Activated CD4-positive, alpha-beta T cell treated with anti-CD3 and anti-CD28 coated beads for 36 hours (primary cell): ENCODE measurements at regions of chrX and their contacts with region 1.

Region 1: DNA sequence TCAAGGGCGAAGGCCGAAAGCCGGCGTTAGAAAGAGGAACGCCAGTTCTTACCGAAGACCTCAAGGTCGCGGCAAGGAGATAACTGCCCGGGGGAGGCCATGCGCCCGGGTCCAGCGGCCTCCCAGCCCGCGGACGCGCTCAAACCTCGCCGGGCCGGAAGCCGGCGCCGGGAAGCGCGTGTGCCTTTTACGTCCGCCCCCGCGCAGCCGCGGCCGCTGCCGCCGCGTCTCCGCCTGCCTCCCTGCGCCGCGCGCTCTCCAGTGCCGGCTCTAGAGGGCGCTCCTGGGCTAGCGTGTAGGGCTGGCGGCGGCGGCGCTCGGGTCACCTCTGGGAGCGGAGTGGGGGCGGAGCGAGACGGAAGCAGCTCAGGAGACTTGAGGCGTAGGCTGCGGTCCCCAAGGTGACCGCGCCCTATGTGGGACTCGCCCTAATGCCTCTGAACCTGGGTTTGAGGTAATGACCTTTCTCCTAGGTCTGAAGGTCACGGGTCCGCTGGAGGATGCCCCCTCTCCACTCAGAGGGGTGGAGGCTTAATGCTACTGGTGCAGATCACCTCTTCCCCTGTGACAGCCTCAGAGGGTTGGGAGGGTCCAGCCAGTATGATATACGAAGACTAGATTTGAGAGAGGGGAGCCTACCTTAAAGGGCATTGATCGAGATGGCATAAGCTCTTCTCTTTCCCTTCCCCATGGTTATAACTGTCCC is 839 bp downstream of the SLC25A5 start:
- DNase-seq: peak; percentile 94
- ATAC-seq: peak; percentile 78
- H3K4me3 Mint-ChIP-seq: peak overlapping the region; percentile 85
- H3K27ac Mint-ChIP-seq: peak overlapping the region; percentile 86
- H3K4me1 Mint-ChIP-seq: peaks cover 12% of the 10 kb centered on the region
- H3K27me3 Mint-ChIP-seq: no peaks in the 10 kb centered on the region

Region 2: DNA sequence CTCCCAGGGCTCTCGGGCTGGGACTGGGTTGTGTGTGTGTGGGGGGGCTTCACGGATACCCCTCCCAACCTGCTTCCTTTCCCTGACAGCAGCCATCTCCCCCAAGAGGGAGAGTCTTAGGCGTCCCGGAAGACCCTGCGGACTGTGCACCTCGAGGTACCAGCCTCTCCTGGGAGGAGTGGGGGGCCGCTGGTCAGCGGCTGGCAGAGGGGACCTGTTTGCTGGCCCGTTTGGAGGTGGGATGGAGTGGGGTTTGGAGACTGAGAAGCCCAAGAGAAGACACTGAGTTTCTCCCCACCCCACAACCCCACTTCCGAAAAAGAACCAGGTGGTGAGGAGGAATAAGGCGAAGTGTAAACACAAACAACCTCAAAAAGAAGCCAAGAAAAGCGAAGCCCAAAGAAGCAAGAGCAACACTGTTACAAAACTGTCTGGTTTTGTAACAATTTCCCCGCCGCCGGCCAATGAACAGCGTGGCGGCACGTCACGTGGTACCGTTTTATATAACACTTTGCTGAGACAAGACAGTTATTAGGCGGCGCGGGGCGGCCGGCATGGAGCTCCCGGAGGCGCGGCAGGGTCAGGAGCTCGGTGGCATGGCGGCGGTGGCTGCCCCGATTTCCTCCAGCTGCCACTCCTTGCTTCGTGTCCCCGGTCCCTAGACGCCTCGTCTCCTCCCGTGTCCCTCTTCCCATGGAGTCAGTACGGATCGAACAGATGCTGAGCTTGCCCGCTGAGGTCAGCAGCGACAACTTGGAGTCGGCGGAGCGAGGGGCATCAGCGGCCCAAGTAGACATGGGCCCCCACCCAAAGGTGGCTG is 494.8 kb before region 1 on chrX and contains the start of gene LONRF3:
- CTCF ChIA-PET with region 1: no interaction called
- POLR2A ChIA-PET with region 1: no interaction called
- intact Hi-C with region 1: loop called in 1 of 2 experiments (anchors 10 kb)
- DNase-seq: peak; percentile 70
- ATAC-seq: peak; percentile 47
- H3K4me3 Mint-ChIP-seq: peak within 1 kb of the TSS; percentile 85
- H3K27ac Mint-ChIP-seq: peak within 1 kb of the TSS; percentile 93
- H3K4me1 Mint-ChIP-seq: peaks cover 8% of the 10 kb centered on the region
- H3K27me3 Mint-ChIP-seq: peaks cover 12% of the 10 kb centered on the region
- total RNA-seq, gene LONRF3: 1.7 to 1.9 TPM

Region 3: DNA sequence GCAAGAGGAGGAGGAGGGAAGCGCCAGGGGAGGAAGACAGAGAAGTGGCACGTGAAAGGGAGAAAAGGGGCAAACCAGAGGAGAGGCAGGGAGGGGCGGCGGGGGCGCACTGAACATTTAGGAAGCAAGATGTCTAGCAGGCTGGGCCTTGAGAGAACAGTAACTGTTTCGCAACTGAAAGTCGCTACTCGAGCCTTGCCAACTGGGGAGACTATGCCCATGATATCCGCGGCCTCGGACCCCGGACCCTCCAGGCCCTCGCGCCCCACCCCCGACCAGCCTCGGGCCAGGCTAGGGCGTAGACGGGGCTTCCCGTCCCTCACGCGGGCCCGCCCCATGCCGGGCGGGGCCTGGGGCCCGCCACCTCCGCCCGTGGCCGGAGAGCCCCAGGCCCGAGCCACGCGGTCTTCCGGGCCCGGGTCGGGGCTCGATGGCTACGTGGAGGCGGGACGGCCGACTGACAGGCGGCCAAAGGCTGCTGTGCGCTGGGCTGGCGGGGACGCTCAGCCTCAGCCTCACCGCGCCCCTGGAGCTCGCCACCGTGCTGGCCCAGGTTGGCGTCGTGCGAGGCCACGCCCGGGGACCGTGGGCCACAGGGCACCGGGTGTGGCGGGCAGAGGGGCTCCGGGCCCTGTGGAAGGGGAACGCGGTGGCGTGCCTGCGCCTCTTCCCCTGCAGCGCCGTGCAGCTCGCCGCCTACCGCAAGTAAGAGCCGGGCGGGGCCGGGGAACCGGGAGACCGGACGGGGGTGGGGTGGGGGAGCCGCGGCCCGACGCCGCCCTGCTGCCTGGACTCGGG is 69.9 kb before region 1 on chrX and contains the start of gene SLC25A43:
- CTCF ChIA-PET with region 1: interaction called, 3 read pairs
- POLR2A ChIA-PET with region 1: no interaction called
- intact Hi-C with region 1: loop called (anchors 5 to 10 kb)
- DNase-seq: peak; percentile 45
- ATAC-seq: peak; percentile 83
- H3K4me3 Mint-ChIP-seq: peak within 1 kb of the TSS; percentile 65
- H3K27ac Mint-ChIP-seq: peak within 1 kb of the TSS; percentile 60
- H3K4me1 Mint-ChIP-seq: peaks cover 14% of the 10 kb centered on the region
- H3K27me3 Mint-ChIP-seq: no peaks in the 10 kb centered on the region
- total RNA-seq, gene SLC25A43: 3.6 to 4.8 TPM

Region 4: GRCh38 chrX:119565107-119565663 is 96.1 kb after region 1 on chrX and contains the start of gene STEEP1:
- CTCF ChIA-PET with region 1: no interaction called
- POLR2A ChIA-PET with region 1: no interaction called
- intact Hi-C with region 1: loop called in 1 of 2 experiments (anchors 1 kb)
- DNase-seq: peak; percentile 93
- ATAC-seq: peak; percentile 99
- H3K4me3 Mint-ChIP-seq: peak within 1 kb of the TSS; percentile 89
- H3K27ac Mint-ChIP-seq: peak within 1 kb of the TSS; percentile 91
- H3K4me1 Mint-ChIP-seq: peaks cover 12% of the 10 kb centered on the region
- H3K27me3 Mint-ChIP-seq: no peaks in the 10 kb centered on the region
- total RNA-seq, gene STEEP1: 21.3 to 21.7 TPM

Region 5: DNA sequence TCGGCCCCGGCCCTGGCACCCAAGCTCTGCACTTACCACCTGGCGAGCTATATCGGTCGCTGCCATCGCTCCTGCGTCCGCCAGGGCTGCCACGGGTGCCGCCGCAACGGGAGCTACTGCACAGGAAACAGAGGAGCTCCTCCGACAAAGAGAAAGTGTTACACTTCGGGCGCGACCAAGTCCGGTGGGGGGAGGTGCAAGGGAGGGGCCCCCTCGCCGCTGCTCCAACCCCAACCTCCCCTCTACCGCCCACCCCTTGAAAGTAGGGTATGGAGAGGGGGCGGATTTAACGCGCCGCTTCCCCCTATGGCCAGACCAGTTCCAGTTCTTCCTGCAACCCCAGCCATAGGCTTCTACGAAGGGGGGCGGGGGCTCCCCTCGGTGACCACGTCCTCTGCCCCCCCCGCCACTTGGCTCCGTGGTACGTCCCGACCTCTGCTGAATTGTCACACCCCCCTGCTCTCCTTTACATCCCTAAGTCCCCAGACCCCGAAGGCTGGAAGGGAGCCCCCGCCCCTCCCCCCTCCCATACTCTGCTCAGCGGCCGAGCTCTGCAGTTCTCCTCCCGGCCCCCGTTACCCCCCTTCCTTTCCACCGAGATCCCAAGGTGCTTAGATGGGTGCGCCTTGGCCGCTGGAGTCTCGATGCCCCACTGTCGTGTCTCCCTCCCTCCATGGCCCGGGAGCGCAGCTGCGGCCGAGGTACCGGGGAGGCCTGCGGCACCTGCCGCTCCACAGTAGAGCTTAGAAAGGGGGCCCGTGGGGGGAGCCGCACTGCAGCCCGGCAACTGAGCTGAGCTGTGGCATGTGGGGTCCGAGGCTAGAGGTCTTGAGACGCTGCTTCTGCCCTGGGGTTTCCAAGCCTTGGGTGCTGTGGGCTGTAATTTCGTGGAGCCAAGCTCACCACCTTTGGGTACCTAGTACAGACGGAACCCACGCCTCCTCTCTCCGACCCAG is 224.2 kb after region 1 on chrX and contains the start of gene SEPTIN6:
- CTCF ChIA-PET with region 1: interaction called, 3 read pairs
- POLR2A ChIA-PET with region 1: no interaction called
- intact Hi-C with region 1: loop called in 1 of 2 experiments (anchors 2 kb)
- DNase-seq: peak; percentile 90
- ATAC-seq: peak; percentile 53
- H3K4me3 Mint-ChIP-seq: peak within 1 kb of the TSS; percentile 98
- H3K27ac Mint-ChIP-seq: peak within 1 kb of the TSS; percentile 98
- H3K4me1 Mint-ChIP-seq: peaks cover 3% of the 10 kb centered on the region
- H3K27me3 Mint-ChIP-seq: no peaks in the 10 kb centered on the region
- total RNA-seq, gene SEPTIN6: 183 to 233 TPM

Region 6: GRCh38 chrX:119943185-119943988 is 474.3 kb after region 1 on chrX and contains the start of gene NKAP:
- CTCF ChIA-PET with region 1: no interaction called
- POLR2A ChIA-PET with region 1: interaction called, 4 read pairs
- intact Hi-C with region 1: loop called in 1 of 2 experiments (anchors 2 kb)
- DNase-seq: peak; percentile 84
- ATAC-seq: peak; percentile 89
- H3K4me3 Mint-ChIP-seq: peak within 1 kb of the TSS; percentile 99
- H3K27ac Mint-ChIP-seq: peak within 1 kb of the TSS; percentile 98
- H3K4me1 Mint-ChIP-seq: peaks cover 20% of the 10 kb centered on the region
- H3K27me3 Mint-ChIP-seq: peaks cover under 1% of the 10 kb centered on the region
- total RNA-seq, gene NKAP: 11.8 to 12.2 TPM